ENCODE measurements at regions of chr1 and their contacts with region 1.

Region 1: DNA sequence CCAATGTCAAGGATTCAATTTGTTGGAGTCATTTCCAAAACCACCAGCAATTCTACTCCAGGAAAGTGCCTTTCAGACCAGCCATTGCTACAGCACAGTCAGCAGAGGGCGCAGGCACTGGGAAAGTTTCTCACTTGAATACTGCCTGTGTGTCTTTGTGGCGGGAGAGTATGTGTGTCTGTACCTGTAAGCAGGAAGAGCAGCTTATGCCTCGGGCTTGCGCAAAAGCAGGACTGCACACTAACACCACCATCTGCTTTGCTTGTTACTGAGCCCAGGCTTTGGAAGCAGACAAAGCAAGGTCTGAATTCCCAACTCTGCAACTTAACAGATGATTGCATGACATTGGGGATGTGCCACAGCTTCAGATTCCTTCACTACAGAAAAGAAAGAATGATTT is 7.0 kb upstream of the CTSE start:
- DNase-seq: peak; percentile 66
- ATAC-seq: peak; percentile 99
- H3K4me3 ChIP-seq: no peak overlapping the region
- H3K27ac ChIP-seq: no peak overlapping the region
- H3K4me1 ChIP-seq: peaks cover 15% of the 10 kb centered on the region
- H3K27me3 ChIP-seq: no peaks in the 10 kb centered on the region
- CTCF ChIP-seq: peak; percentile 85 to 95 (median 95)
- EP300 ChIP-seq: no peak
- POLR2A ChIP-seq: no peak
- RAD21 ChIP-seq: peak; percentile 92

Region 2: GRCh38 chr1:205919026-205919746 is 111.5 kb before region 1 on chr1:
- CTCF ChIA-PET with region 1: interaction called, 21 read pairs
- POLR2A ChIA-PET with region 1: no interaction called
- RAD21 ChIA-PET with region 1: interaction called, 6 read pairs
- SMC1A ChIA-PET with region 1: interaction called, 20 read pairs
- in situ Hi-C with region 1: no loop called
- intact Hi-C with region 1: no loop called
- DNase-seq: peak; percentile 24
- ATAC-seq: peak; percentile 94
- H3K4me3 ChIP-seq: no peak overlapping the region
- H3K27ac ChIP-seq: no peak overlapping the region
- H3K4me1 ChIP-seq: no peaks in the 10 kb centered on the region; the same call in 1 of the 2 replicates
- H3K27me3 ChIP-seq: peaks cover 2 to 4% of the 10 kb centered on the region in 2 experiments; a peak in 2 of 4 replicates
- CTCF ChIP-seq: peak; percentile 90 to 93 (median 93)
- EP300 ChIP-seq: no peak
- POLR2A ChIP-seq: no peak
- RAD21 ChIP-seq: peak; percentile 91

Region 3: GRCh38 chr1:205991237-205991636 is 39.5 kb before region 1 on chr1:
- CTCF ChIA-PET with region 1: interaction called, 107 read pairs
- POLR2A ChIA-PET with region 1: no interaction called
- RAD21 ChIA-PET with region 1: interaction called, 54 read pairs
- SMC1A ChIA-PET with region 1: interaction called, 38 read pairs
- in situ Hi-C with region 1: no loop called
- intact Hi-C with region 1: no loop called
- DNase-seq: no peak
- ATAC-seq: no peak
- H3K4me3 ChIP-seq: no peak overlapping the region
- H3K27ac ChIP-seq: no peak overlapping the region
- H3K4me1 ChIP-seq: no peaks in the 10 kb centered on the region
- H3K27me3 ChIP-seq: peaks cover 4 to 6% of the 10 kb centered on the region in 2 experiments
- CTCF ChIP-seq: no peak
- EP300 ChIP-seq: no peak
- POLR2A ChIP-seq: no peak
- RAD21 ChIP-seq: no peak

Region 4: DNA sequence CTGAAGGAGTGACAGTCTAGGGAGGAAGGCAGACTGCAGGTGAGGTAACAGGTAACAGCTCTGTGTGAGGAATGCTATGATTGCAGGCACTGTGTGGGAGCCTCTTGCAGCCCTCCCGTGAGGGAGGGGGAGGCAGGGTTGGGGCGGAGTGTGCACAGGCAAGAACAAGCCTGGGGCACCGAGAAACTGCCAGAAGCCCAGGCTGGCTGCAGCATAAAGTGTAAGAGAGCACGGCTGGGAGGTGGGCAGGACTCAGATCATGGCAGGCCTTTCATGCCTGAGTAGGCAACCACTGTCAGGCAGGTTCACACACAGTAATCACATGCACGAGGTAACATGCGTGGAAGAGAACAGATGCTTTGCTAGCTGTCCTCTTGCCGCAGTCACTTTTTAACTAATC is 10.9 kb after region 1 on chr1:
- CTCF ChIA-PET with region 1: interaction called, 31 read pairs
- POLR2A ChIA-PET with region 1: interaction called, 5 read pairs
- RAD21 ChIA-PET with region 1: interaction called, 7 read pairs
- SMC1A ChIA-PET with region 1: interaction called, 30 read pairs
- in situ Hi-C with region 1: no loop called
- intact Hi-C with region 1: no loop called
- DNase-seq: no peak
- ATAC-seq: peak; percentile 84
- H3K4me3 ChIP-seq: no peak overlapping the region
- H3K27ac ChIP-seq: peak overlapping the region; percentile 35
- H3K4me1 ChIP-seq: peaks cover 48% of the 10 kb centered on the region
- H3K27me3 ChIP-seq: no peaks in the 10 kb centered on the region; a peak in 1 of 4 replicates
- CTCF ChIP-seq: no peak
- EP300 ChIP-seq: no peak
- POLR2A ChIP-seq: no peak
- RAD21 ChIP-seq: no peak

Region 5: DNA sequence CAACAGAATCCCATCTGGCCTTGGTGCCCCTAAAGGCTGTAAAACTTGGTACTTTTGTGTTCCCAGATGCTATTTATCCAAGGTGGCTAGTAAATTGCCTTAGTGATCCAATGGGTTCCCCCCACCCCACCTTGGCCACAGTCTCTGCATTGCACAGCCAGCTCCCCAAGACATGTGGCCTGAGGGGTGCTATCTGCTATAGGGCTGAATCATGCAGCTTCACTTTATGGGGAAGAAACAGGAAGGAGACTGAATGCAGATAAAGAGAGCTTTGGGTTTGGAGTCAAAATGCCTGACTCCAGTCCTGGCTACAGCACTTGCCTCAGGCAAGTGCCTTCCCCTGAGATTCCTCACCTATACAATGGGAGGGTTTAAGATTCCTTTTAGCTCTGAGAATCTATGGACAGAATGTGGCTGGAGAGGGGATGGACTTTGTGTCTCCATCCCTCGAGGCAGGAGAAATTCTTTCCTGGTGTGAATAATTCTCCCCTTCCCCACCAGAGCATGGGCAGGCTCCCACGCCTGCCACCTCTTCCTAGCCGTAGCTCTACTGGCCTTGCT is 28.7 kb after region 1 on chr1:
- CTCF ChIA-PET with region 1: interaction called, 72 read pairs
- POLR2A ChIA-PET with region 1: no interaction called
- RAD21 ChIA-PET with region 1: interaction called, 19 read pairs
- SMC1A ChIA-PET with region 1: interaction called, 63 read pairs
- in situ Hi-C with region 1: no loop called
- intact Hi-C with region 1: no loop called
- DNase-seq: no peak
- ATAC-seq: peak; percentile 36
- H3K4me3 ChIP-seq: no peak overlapping the region
- H3K27ac ChIP-seq: no peak overlapping the region; the same call in 1 of the 2 replicates
- H3K4me1 ChIP-seq: peaks cover 10% of the 10 kb centered on the region
- H3K27me3 ChIP-seq: no peaks in the 10 kb centered on the region
- CTCF ChIP-seq: no peak
- EP300 ChIP-seq: no peak
- POLR2A ChIP-seq: no peak; the same call in 1 of the 2 replicates
- RAD21 ChIP-seq: no peak

Region 6: DNA sequence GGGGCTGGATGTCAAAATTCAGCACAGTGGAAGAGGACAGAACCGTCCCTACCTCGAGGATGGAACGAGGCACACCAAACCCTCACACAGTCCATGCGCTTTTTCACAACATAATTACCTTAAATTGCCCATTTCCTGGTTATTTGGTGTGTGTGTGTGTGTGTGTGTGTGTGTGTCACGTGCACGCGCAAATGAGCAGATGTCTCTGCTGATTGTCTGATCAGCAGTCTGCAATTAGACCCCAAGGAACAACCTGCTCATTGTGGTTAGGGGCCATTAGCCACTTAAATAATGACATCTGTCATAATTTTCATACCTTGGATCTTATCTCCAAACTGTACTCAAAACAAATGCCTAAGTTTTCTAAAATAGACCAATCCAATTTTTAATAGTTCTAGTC is 63.3 kb after region 1 on chr1:
- CTCF ChIA-PET with region 1: interaction called, 26 read pairs
- POLR2A ChIA-PET with region 1: interaction called, 3 read pairs
- RAD21 ChIA-PET with region 1: interaction called, 3 read pairs
- SMC1A ChIA-PET with region 1: interaction called, 329 read pairs
- in situ Hi-C with region 1: no loop called
- intact Hi-C with region 1: no loop called
- DNase-seq: no peak
- ATAC-seq: no peak
- H3K4me3 ChIP-seq: no peak overlapping the region
- H3K27ac ChIP-seq: no peak overlapping the region
- H3K4me1 ChIP-seq: no peaks in the 10 kb centered on the region; the same call in 1 of the 2 replicates
- H3K27me3 ChIP-seq: no peaks in the 10 kb centered on the region; a peak in 1 of 4 replicates
- CTCF ChIP-seq: no peak
- EP300 ChIP-seq: no peak
- POLR2A ChIP-seq: no peak
- RAD21 ChIP-seq: no peak

Measured in GM12878 (cell line).